Activated CD4-positive, alpha-beta T cell treated with anti-CD3 and anti-CD28 coated beads for 36 hours (primary cell): ENCODE measurements at regions of chr9 and their contacts with region 1.

Region 1: DNA sequence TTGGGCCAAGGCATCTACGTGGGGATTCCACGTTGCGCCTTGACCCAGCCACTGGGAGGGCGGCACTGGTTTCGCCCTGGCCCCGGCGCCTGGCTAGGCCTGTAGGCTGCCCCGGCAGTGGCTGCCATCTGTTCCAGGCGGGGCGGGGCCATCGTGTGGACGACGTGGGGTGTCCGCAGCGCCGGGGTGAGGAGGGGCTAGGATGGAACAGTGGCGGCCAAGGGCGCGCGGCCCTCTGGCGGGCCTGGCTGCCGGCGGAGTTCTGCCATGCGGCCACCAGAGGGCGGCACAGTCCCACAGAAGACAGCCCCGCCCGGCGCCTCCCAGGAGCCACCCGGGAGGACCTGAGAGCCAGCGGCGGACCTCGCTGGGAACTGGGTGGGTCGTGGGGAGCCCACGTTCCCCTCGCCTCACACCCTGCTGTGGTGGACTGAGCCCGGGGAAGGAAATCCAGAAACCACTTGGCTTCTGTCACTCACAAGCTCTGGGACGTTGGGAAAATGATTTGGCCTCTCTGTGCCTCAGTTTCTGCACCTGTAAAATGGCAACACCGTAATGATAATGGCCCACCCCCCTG is 22.6 kb upstream of the RAPGEF1 start:
- DNase-seq: peak; percentile 89
- ATAC-seq: peak; percentile 90
- H3K4me3 Mint-ChIP-seq: no peak overlapping the region
- H3K27ac Mint-ChIP-seq: no peak overlapping the region
- H3K4me1 Mint-ChIP-seq: peaks cover 14% of the 10 kb centered on the region
- H3K27me3 Mint-ChIP-seq: peaks cover 5% of the 10 kb centered on the region

Region 2: DNA sequence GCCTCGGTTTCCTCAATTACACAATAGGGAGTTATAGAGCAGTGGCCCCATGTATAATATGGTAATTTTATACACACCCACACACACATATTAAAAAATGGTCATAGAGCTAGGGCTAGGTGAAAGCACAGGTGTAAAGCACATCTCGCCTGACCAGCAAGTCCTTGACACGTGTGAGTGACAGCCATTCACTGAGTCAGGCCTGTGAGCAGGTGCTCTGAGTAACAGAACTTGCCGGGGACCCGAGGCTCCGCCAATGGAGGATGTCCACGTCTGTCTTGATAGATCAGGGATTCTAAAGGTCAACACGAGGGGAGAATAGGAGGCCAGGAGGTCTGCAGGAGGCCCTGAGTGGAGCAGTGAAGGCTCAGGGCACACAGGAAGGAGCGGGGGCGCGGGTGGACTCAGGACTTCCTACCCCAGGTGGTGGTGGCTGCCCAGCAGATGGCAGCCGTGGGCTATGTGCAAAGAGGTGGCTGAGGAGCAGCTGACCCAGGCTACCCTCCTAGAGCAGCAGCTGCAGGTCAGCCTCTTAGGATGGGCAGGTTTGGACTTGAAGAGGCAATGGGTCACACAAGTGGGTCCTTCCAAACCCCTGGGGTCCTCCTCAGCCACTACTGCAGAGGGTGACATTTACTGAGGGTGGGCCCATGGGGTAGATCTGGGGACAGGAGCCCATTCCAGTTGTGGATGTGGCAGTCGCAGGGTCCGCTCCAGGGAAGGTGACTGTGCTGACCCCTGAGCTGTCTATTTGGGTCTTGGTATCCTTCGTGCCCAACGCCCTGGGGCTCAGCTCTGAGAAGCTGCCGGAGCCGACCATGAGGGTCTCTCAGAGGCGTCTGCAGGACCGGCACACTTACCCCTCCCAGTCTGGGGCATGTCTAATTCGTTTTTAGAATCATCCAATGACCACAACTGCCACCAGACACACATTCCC is 171.3 kb before region 1 on chr9:
- CTCF ChIA-PET with region 1: interaction called, 11 read pairs
- POLR2A ChIA-PET with region 1: interaction called, 3 read pairs
- intact Hi-C with region 1: no loop called
- DNase-seq: peak; percentile 90
- ATAC-seq: peak; percentile 94
- H3K4me3 Mint-ChIP-seq: no peak overlapping the region
- H3K27ac Mint-ChIP-seq: peak overlapping the region; percentile 85
- H3K4me1 Mint-ChIP-seq: peaks cover 28% of the 10 kb centered on the region
- H3K27me3 Mint-ChIP-seq: no peaks in the 10 kb centered on the region

Region 3: DNA sequence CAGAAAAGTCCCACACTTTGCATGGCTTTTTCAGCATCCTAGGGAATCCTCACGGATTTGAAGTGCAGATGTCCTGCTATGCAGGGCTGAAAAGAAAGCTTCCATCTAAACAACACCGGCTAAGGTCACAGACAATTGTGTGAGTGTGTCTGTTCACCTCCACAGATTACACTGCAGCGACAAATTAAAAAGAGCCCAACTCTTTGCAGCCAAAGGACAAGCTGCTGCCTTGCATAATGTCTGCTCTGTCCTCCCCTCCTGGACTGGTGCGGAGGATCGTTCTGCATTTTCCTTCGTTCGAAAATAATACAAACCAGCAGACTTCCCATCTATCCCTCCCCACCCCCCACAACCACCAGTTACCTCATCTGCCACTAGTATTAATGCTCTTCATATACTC is 148.1 kb after region 1 on chr9:
- CTCF ChIA-PET with region 1: no interaction called
- POLR2A ChIA-PET with region 1: no interaction called
- intact Hi-C with region 1: no loop called
- DNase-seq: no peak
- ATAC-seq: no peak
- H3K4me3 Mint-ChIP-seq: no peak overlapping the region
- H3K27ac Mint-ChIP-seq: no peak overlapping the region
- H3K4me1 Mint-ChIP-seq: peaks cover 2% of the 10 kb centered on the region
- H3K27me3 Mint-ChIP-seq: no peaks in the 10 kb centered on the region

Region 4: DNA sequence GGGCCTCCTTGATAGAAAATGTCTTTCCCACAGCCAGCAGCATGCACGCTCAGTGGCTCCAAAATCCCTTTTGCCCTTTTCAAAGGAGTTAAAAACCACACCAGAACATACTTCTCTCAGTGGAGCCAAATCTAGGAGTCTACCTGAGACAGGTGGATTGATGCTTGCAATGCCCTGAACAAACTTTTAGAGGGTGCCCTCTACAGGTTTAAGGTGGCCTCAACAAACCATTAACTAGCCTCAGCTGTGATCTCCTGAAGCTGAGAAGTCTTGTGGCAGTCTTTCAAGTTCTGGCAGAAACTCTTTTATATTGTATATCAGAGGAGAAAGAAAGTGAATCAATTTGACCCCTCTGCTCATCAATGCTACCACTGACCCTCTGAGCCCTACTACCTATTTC is 191.9 kb after region 1 on chr9:
- CTCF ChIA-PET with region 1: no interaction called
- POLR2A ChIA-PET with region 1: no interaction called
- intact Hi-C with region 1: loop called in 1 of 2 experiments (anchors 1 kb)
- DNase-seq: no peak
- ATAC-seq: no peak
- H3K4me3 Mint-ChIP-seq: no peak overlapping the region
- H3K27ac Mint-ChIP-seq: no peak overlapping the region
- H3K4me1 Mint-ChIP-seq: no peaks in the 10 kb centered on the region
- H3K27me3 Mint-ChIP-seq: no peaks in the 10 kb centered on the region

Region 5: DNA sequence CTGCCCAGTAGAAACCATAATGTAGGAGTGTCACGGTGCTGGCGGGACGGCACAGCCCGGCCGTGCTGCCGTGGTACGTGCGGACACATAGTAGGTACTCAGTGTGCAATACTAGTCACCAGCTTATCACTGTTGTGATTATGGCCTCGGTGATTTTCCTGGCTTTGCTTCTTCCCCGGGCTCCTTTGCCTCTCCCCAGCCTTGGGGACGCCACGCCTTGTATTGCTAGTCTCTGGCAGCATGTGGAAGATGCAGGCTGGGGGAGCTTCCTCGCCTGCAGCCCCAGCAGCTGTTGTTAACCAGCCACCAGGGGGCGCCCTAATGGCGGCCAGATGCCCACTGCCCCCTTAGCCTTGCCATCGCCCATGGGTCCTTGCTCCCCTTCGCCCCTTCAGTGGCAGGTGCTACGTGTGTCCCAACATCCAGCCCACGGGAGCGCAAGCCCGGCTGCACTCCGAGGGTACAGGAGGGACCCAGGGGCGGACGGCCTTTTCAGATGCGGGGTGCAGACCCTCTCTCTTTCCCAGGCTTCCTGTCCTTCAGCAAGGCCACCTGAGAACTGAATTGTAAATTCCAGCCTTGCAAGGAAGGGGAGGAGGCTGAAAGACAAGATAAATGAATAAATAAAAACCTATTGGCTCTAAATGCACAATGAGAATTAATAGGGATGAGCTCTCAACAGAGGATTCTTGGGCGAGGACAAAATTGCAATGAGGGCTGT is 407.4 kb after region 1 on chr9:
- CTCF ChIA-PET with region 1: interaction called, 5 read pairs
- POLR2A ChIA-PET with region 1: no interaction called
- intact Hi-C with region 1: loop called (anchors 2 to 5 kb)
- DNase-seq: peak; percentile 79
- ATAC-seq: peak; percentile 58
- H3K4me3 Mint-ChIP-seq: no peak overlapping the region
- H3K27ac Mint-ChIP-seq: no peak overlapping the region
- H3K4me1 Mint-ChIP-seq: no peaks in the 10 kb centered on the region
- H3K27me3 Mint-ChIP-seq: peaks cover 33% of the 10 kb centered on the region

Region 6: DNA sequence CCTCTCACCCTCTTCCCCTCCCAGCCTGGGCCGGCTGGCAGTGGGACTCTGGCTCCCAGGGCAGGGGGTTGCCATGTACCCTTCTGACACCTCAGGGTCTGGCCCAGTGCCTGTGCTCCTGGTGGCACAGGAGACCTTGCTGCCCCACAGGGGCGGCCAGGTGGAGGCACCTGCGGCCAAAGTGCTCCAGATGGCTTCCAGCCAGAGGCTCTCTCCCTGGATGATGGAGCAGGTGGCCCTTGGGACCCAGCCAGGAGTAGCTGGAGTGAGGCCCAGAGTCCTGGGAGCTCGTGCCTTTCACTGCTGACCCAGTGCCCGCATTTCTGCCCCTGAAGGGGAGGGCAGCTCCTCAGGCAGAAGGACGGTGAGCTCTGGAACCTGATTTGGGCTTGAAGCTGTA is 486.7 kb after region 1 on chr9:
- CTCF ChIA-PET with region 1: interaction called, 24 read pairs
- POLR2A ChIA-PET with region 1: no interaction called
- intact Hi-C with region 1: loop called (anchors 1 to 5 kb)
- DNase-seq: no peak
- ATAC-seq: no peak
- H3K4me3 Mint-ChIP-seq: no peak overlapping the region
- H3K27ac Mint-ChIP-seq: no peak overlapping the region
- H3K4me1 Mint-ChIP-seq: peaks cover 2% of the 10 kb centered on the region
- H3K27me3 Mint-ChIP-seq: peaks cover 2% of the 10 kb centered on the region

Region 7: GRCh38 chr9:132260846-132261245 is 498.4 kb after region 1 on chr9:
- CTCF ChIA-PET with region 1: interaction called, 15 read pairs
- POLR2A ChIA-PET with region 1: no interaction called
- intact Hi-C with region 1: no loop called
- DNase-seq: no peak
- ATAC-seq: no peak
- H3K4me3 Mint-ChIP-seq: no peak overlapping the region
- H3K27ac Mint-ChIP-seq: no peak overlapping the region
- H3K4me1 Mint-ChIP-seq: peaks cover 8% of the 10 kb centered on the region
- H3K27me3 Mint-ChIP-seq: no peaks in the 10 kb centered on the region

Region 8: DNA sequence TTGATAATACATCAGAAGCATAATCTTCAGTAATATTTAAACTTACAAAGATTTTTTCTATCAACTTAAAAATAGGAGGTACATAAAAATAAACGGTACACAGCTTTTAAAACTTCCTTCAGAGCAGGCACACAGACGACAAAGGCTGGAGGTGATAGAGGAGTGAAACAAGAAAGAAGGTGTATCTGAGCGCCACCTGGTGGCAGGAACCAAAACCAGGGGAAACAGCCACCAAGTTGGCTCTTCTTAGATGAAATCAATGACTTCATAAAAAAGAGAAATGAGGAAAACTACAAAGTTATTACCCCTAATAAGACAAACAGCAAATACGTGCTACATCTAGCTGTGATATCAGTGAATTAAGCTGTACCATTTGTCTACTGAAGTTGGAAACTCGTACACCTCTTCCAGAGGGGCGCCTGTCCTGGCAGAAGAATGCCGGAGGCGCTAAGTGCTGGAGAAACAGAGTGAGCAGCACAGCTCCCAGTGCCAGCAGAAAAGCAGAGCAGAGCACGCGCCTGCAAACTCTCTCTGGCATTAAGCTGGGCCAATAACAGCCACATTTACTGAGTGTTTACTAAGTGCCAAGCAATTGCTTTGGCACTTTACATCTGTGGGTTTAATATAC is 506.4 kb after region 1 on chr9:
- CTCF ChIA-PET with region 1: interaction called, 5 read pairs
- POLR2A ChIA-PET with region 1: no interaction called
- intact Hi-C with region 1: loop called in 1 of 2 experiments (anchors 1 kb)
- DNase-seq: peak; percentile 87
- ATAC-seq: peak; percentile 80
- H3K4me3 Mint-ChIP-seq: no peak overlapping the region
- H3K27ac Mint-ChIP-seq: peak overlapping the region; percentile 67
- H3K4me1 Mint-ChIP-seq: peaks cover 17% of the 10 kb centered on the region
- H3K27me3 Mint-ChIP-seq: no peaks in the 10 kb centered on the region